Thyroid gland (tissue), 4 donors: ENCODE measurements at regions of chr6 and their contacts with region 1.

Region 1: GRCh38 chr6:30915591-30915946 is 1.5 kb downstream of the VARS2 start:
- DNase-seq: peak; percentile 7 to 31
- H3K4me3 ChIP-seq: no peak overlapping the region
- H3K27ac ChIP-seq: peak overlapping the region; percentile 84 to 92 (median 92)
- H3K4me1 ChIP-seq: peaks cover 21 to 23% of the 10 kb centered on the region in 2 donors
- H3K27me3 ChIP-seq: no peaks in the 10 kb centered on the region
- CTCF ChIP-seq: peak in 5 of 6 experiments; percentile 37 to 93 (median 68)
- POLR2A ChIP-seq: no peak

Region 2: GRCh38 chr6:31079656-31080261 is 164.2 kb after region 1 on chr6:
- intact Hi-C with region 1: loop called (anchors 5 kb)
- DNase-seq: peak; percentile 67 to 77
- H3K4me3 ChIP-seq: no peak overlapping the region
- H3K27ac ChIP-seq: no peak overlapping the region
- H3K4me1 ChIP-seq: peaks cover 0 to 4% of the 10 kb centered on the region in 2 donors
- H3K27me3 ChIP-seq: no peaks in the 10 kb centered on the region
- CTCF ChIP-seq: peak; percentile 52 to 86 (median 80)
- POLR2A ChIP-seq: no peak

Region 3: GRCh38 chr6:32288426-32288825 is 1372.9 kb after region 1 on chr6:
- intact Hi-C with region 1: no loop called
- DNase-seq: no peak
- H3K4me3 ChIP-seq: no peak overlapping the region
- H3K27ac ChIP-seq: no peak overlapping the region
- H3K4me1 ChIP-seq: no peaks in the 10 kb centered on the region
- H3K27me3 ChIP-seq: no peaks in the 10 kb centered on the region
- CTCF ChIP-seq: no peak
- POLR2A ChIP-seq: no peak